ENCODE measurements at regions of chr2 and their contacts with region 1.

Region 1: GRCh38 chr2:167844714-167845530 is 402.5 kb downstream of the STK39 start:
- DNase-seq: peak in 1 of 2 experiments; percentile 20
- H3K4me3 ChIP-seq: no peak overlapping the region
- H3K27ac ChIP-seq: no peak overlapping the region
- H3K4me1 ChIP-seq: no peaks in the 10 kb centered on the region
- H3K27me3 ChIP-seq: no peaks in the 10 kb centered on the region
- CTCF ChIP-seq: no peak

Region 2: GRCh38 chr2:167729911-167730310 is 115.0 kb before region 1 on chr2:
- CTCF ChIA-PET with region 1: interaction called, 13 read pairs
- POLR2A ChIA-PET with region 1: no interaction called
- intact Hi-C with region 1: no loop called
- DNase-seq: no peak
- H3K4me3 ChIP-seq: no peak overlapping the region
- H3K27ac ChIP-seq: no peak overlapping the region
- H3K4me1 ChIP-seq: no peaks in the 10 kb centered on the region
- H3K27me3 ChIP-seq: no peaks in the 10 kb centered on the region
- CTCF ChIP-seq: no peak

Region 3: GRCh38 chr2:167898340-167898739 is 53.4 kb after region 1 on chr2:
- CTCF ChIA-PET with region 1: no interaction called
- POLR2A ChIA-PET with region 1: no interaction called
- intact Hi-C with region 1: no loop called
- DNase-seq: no peak
- H3K4me3 ChIP-seq: no peak overlapping the region
- H3K27ac ChIP-seq: no peak overlapping the region
- H3K4me1 ChIP-seq: no peaks in the 10 kb centered on the region
- H3K27me3 ChIP-seq: no peaks in the 10 kb centered on the region
- CTCF ChIP-seq: no peak

Measured in PC-9 (cell line).